Heart left ventricle (tissue), 16 donors: ENCODE measurements at regions of chr17 and their contacts with region 1.

Region 1: DNA sequence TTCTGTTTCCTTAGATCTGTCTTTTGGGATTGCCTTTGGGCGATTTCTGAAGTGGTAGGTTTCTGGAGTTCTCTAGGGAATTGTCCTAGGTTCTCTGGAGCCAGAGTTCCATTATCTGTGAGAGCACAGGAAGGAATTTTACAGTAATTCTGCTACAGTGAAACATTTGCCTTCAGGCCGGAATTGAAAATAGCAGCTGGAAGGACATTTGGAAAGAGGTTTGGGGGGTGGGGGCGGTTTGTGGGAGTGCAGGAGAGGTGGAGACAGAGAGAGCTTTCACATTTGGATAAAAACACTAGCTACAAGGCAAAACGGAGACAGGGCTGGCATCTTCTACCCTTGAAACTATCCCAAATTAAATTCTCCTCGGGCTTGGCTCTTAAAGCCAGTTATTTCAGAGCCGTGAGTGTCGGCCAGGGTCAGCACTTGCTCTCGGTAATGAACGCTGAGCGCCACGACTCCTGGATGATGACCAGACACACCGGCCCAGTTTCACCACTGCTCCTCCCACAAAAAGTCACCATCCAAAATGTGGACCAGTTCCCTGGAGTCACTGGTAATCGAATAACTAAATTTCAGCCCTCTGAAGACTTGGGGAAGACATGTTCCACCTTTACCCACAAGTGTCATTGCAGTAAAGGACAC is 67.7 kb upstream of the TANC2 start:
- DNase-seq: peak in 2 of 5 donors; percentile 28 to 51
- ATAC-seq: peak; percentile 22 to 70 (median 51)
- H3K4me3 ChIP-seq: peak overlapping the region in 2 of 12 donors; percentile 18 to 22
- H3K27ac ChIP-seq: peak overlapping the region in 5 of 12 donors; percentile 7 to 49 (median 48)
- H3K4me1 ChIP-seq: peaks cover 0 to 25% (median 7%) of the 10 kb centered on the region in 12 donors
- H3K27me3 ChIP-seq: no peaks in the 10 kb centered on the region
- CTCF ChIP-seq: no peak
- POLR2A ChIP-seq: no peak

Region 2: DNA sequence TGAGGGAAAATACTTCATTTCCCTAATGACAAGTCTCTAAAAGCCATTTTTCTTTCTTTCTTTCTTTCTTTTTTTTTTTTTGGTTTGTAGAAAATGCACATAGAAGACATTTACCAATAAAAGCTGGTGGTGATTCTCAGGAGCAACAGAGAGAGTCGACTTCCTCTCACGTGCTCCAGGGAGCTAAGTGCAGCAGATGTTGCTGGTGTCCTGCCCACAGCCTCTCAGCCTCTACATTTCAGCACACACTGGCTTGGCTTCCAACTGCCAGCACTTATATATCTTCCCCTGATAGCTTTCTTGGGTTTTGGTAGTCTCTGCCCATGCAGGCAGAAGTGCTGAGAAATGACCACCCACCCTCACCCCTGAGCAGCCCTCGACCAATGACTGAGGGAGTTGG is 31.9 kb before region 1 on chr17:
- intact Hi-C with region 1: loop called in 1 of 10 experiments (anchors 5 kb)
- DNase-seq: no peak
- ATAC-seq: no peak
- H3K4me3 ChIP-seq: no peak overlapping the region
- H3K27ac ChIP-seq: no peak overlapping the region
- H3K4me1 ChIP-seq: no peaks in the 10 kb centered on the region
- H3K27me3 ChIP-seq: peaks cover 0 to 3% (median 0%) of the 10 kb centered on the region in 9 donors
- CTCF ChIP-seq: no peak
- POLR2A ChIP-seq: no peak